ENCODE measurements at regions of chr11 and their contacts with region 1.

Region 1: DNA sequence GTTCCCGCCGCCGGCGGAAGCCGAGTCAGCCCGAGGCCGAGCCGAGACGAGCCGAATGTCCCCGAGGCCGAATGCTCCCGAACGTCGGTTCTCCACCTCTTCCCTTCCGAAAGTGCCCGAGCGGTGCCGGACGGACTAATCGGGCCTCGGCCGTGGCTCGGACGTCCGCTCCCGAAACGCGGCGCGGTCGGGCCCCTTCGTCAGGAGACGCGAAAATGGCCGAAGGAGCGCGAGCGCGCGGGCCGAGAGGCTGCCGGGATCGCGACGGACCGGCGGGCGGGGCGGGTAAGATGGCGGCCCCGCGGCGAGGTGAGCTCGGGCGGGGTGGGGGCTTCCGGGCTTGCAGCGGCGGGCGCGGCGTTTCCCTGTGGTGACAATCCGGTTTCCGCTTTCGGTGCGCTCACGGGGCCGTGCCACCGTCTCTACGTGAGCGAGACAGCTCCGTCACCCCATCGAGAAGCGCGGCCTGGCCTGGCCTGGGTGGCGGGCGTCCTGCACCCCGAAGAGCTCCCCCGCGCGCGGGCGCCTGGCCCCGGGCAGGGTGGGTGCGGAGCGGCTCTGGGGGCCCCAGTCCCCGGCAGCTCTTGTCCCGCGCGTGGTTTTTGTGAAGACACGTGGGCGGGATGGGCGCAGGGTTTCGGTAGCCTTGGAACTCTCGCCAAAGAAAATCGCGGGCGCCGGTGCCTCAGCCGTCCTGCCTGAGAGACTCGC is at the start of gene TMEM80:
- DNase-seq: peak; percentile 66
- H3K4me3 ChIP-seq: peak within 1 kb of the TSS; percentile 85
- CTCF ChIP-seq: no peak

Region 2: GRCh38 chr11:706957-707816 is 11.5 kb after region 1 on chr11:
- CTCF ChIA-PET with region 1: interaction called, 17 read pairs
- POLR2A ChIA-PET with region 1: interaction called, 9 read pairs
- DNase-seq: no peak
- H3K4me3 ChIP-seq: peak overlapping the region; percentile 61
- CTCF ChIP-seq: peak; percentile 19

Region 3: DNA sequence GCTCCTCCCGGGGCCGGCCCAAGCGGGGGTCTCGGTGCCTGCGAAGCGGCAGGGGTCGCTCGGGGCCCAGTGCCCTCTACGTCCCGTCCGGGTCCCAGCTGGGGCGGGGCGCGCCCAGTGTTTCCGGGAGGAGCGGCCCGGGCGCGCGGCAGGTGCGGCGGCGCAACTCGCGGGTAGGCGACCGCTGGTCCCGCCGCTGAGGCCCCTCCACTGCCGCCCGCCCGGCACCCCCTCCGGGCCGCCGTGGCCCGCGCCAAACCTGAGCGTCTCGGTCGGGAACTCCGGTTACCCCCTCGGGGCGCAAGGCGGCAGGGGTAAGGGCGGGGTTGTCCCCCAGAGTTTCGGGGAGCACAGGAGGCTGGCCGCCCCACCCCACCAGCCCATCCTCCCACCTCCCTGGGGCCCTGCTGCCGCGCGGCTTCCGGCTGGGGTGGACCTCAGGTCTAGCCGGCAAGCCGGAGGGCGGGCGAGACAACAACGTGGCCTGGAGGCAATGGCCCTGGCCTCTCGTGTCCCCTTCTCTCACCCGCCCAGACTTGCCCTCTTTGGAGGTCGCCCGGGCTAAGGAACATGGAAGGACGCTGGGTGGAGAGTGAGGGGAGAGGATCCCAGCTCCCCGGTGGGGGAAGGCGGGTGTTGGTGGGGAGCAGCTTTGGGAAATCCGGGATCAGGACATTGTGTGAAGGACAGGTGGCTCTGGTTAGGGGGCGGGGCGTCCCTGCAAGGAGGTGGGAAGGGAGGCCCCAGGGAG is 131.6 kb after region 1 on chr11:
- CTCF ChIA-PET with region 1: no interaction called
- POLR2A ChIA-PET with region 1: no interaction called
- DNase-seq: no peak
- H3K4me3 ChIP-seq: no peak overlapping the region
- CTCF ChIP-seq: no peak

Measured in AG04449 (cell line).